ENCODE measurements at regions of chr12 and their contacts with region 1.

Region 1: GRCh38 chr12:54958048-54958658 is 26.4 kb downstream of the TESPA1 start:
- DNase-seq: peak in 29 of 35 experiments; percentile 3 to 80 (median 37)
- ATAC-seq: peak in 3 of 4 experiments; percentile 35 to 59 (median 51)
- H3K4me3 ChIP-seq: no peak overlapping the region
- H3K4me3 Mint-ChIP-seq: peak overlapping the region in 1 of 3 donors; percentile 25
- H3K27ac ChIP-seq: no peak overlapping the region
- H3K27ac Mint-ChIP-seq: peak overlapping the region; percentile 86 to 87
- H3K4me1 ChIP-seq: peaks cover 33 to 44% of the 10 kb centered on the region in 2 experiments
- H3K4me1 Mint-ChIP-seq: peaks cover 89 to 93% (median 90%) of the 10 kb centered on the region in 3 donors
- H3K27me3 ChIP-seq: no peaks in the 10 kb centered on the region
- H3K27me3 Mint-ChIP-seq: no peaks in the 10 kb centered on the region

Region 2: GRCh38 chr12:54701940-54702592 is 256.1 kb before region 1 on chr12:
- CTCF ChIA-PET with region 1: interaction called, 7 to 27 read pairs
- POLR2A ChIA-PET with region 1: no interaction called
- DNase-seq: peak in 11 of 35 experiments; percentile 4 to 81 (median 11)
- ATAC-seq: peak; percentile 48 to 55 (median 51)
- H3K4me3 ChIP-seq: no peak overlapping the region
- H3K4me3 Mint-ChIP-seq: no peak overlapping the region
- H3K27ac ChIP-seq: no peak overlapping the region
- H3K27ac Mint-ChIP-seq: no peak overlapping the region
- H3K4me1 ChIP-seq: no peaks in the 10 kb centered on the region
- H3K4me1 Mint-ChIP-seq: no peaks in the 10 kb centered on the region
- H3K27me3 ChIP-seq: peaks cover 0 to 3% of the 10 kb centered on the region in 2 experiments
- H3K27me3 Mint-ChIP-seq: peaks cover 8 to 12% of the 10 kb centered on the region in 2 donors

Region 3: DNA sequence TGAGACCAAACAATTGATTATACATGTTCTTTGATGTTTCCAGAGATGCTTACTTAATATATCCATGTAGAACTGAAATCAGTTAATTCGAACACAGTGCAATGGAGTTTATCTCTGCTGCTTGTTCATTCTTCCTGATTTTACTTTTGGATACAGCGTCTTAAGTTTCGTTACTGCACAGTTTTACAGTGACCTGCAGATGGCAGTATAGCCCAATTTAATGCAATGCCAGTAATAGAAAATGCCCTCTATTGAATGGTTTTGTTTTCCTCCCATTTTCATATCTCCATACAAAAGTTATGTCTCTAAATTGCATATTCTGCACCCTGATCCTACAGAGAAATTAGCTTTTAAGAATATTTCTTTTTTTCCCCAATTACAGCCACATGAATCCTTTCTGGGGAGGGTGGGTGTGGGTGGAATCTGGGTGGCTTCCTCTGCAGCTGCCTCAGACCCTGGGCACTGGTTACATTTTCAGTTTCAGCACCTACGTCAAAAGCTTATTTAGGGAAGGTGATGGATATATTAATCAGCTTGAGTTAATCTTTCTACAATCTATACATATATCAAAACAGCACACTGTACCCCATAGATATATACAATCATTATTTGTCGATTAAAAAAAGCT is 208.8 kb before region 1 on chr12:
- CTCF ChIA-PET with region 1: interaction called, 6 to 53 read pairs
- POLR2A ChIA-PET with region 1: no interaction called
- DNase-seq: peak in 25 of 35 experiments; percentile 7 to 84 (median 23)
- ATAC-seq: peak; percentile 62 to 69 (median 66)
- H3K4me3 ChIP-seq: no peak overlapping the region
- H3K4me3 Mint-ChIP-seq: peak overlapping the region in 2 of 3 donors; percentile 16 to 17
- H3K27ac ChIP-seq: no peak overlapping the region
- H3K27ac Mint-ChIP-seq: peak overlapping the region; percentile 23 to 44
- H3K4me1 ChIP-seq: peaks cover 7 to 15% of the 10 kb centered on the region in 2 experiments
- H3K4me1 Mint-ChIP-seq: peaks cover 20 to 28% (median 25%) of the 10 kb centered on the region in 3 donors
- H3K27me3 ChIP-seq: no peaks in the 10 kb centered on the region
- H3K27me3 Mint-ChIP-seq: no peaks in the 10 kb centered on the region

Region 4: DNA sequence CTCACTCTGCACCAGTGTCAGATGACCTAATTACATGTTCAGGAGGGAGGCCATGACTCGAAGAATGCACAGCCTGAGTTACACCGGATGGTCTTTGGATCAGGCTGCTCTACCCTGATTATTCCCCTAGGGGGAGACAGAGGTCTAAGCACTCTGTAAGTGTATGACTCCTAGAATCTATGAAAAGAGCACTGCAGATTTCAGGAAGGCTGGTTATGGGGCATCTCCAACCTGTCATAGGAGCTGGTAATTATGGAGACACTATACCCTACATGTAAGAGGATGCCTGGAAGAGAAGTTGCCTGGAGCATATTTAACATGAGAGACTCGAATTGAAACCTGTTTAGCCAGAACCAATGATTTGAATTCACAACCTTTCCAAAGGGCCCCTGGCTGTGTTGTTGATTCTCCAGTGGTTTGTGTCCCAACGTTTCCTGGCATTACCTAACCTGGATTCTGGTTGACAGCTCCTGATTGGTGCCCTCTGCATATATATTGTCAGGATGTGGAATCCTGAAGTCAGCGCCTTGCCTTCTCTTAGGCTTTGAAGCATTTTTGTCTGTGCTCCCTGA is 104.1 kb before region 1 on chr12 and contains the start of gene MUCL1:
- CTCF ChIA-PET with region 1: interaction called, 4 to 15 read pairs
- POLR2A ChIA-PET with region 1: no interaction called
- DNase-seq: peak; percentile 24 to 84 (median 58)
- ATAC-seq: peak; percentile 97 to 100 (median 98)
- H3K4me3 ChIP-seq: no peak within 1 kb of the TSS
- H3K4me3 Mint-ChIP-seq: no peak within 1 kb of the TSS
- H3K27ac ChIP-seq: no peak within 1 kb of the TSS
- H3K27ac Mint-ChIP-seq: no peak within 1 kb of the TSS
- H3K4me1 ChIP-seq: no peaks in the 10 kb centered on the region
- H3K4me1 Mint-ChIP-seq: peaks cover 2 to 5% (median 2%) of the 10 kb centered on the region in 3 donors
- H3K27me3 ChIP-seq: no peaks in the 10 kb centered on the region
- H3K27me3 Mint-ChIP-seq: peaks cover 0 to 4% of the 10 kb centered on the region in 2 donors
- total RNA-seq, gene MUCL1: not detected

Region 5: GRCh38 chr12:54977155-54977554 is 19.0 kb after region 1 on chr12:
- CTCF ChIA-PET with region 1: interaction called in 1 of 2 experiments, 12 read pairs
- POLR2A ChIA-PET with region 1: no interaction called
- DNase-seq: no peak
- ATAC-seq: no peak
- H3K4me3 ChIP-seq: peak overlapping the region in 1 of 2 donors; percentile 27
- H3K4me3 Mint-ChIP-seq: peak overlapping the region; percentile 90 to 92 (median 91)
- H3K27ac ChIP-seq: peak overlapping the region; percentile 13
- H3K27ac Mint-ChIP-seq: peak overlapping the region; percentile 92 to 98
- H3K4me1 ChIP-seq: peaks cover 53 to 75% of the 10 kb centered on the region in 2 experiments
- H3K4me1 Mint-ChIP-seq: peaks cover 96 to 99% (median 98%) of the 10 kb centered on the region in 3 donors
- H3K27me3 ChIP-seq: no peaks in the 10 kb centered on the region
- H3K27me3 Mint-ChIP-seq: no peaks in the 10 kb centered on the region

Region 6: GRCh38 chr12:54993161-54993835 is 35.1 kb after region 1 on chr12:
- CTCF ChIA-PET with region 1: interaction called, 3 to 19 read pairs
- POLR2A ChIA-PET with region 1: no interaction called
- DNase-seq: peak in 31 of 35 experiments; percentile 30 to 91 (median 46)
- ATAC-seq: peak; percentile 66 to 81 (median 74)
- H3K4me3 ChIP-seq: no peak overlapping the region
- H3K4me3 Mint-ChIP-seq: no peak overlapping the region
- H3K27ac ChIP-seq: no peak overlapping the region
- H3K27ac Mint-ChIP-seq: peak overlapping the region in 1 of 2 donors; percentile 25
- H3K4me1 ChIP-seq: peaks cover 31 to 34% of the 10 kb centered on the region in 2 experiments
- H3K4me1 Mint-ChIP-seq: peaks cover 44 to 47% (median 46%) of the 10 kb centered on the region in 3 donors
- H3K27me3 ChIP-seq: no peaks in the 10 kb centered on the region
- H3K27me3 Mint-ChIP-seq: no peaks in the 10 kb centered on the region

Region 7: DNA sequence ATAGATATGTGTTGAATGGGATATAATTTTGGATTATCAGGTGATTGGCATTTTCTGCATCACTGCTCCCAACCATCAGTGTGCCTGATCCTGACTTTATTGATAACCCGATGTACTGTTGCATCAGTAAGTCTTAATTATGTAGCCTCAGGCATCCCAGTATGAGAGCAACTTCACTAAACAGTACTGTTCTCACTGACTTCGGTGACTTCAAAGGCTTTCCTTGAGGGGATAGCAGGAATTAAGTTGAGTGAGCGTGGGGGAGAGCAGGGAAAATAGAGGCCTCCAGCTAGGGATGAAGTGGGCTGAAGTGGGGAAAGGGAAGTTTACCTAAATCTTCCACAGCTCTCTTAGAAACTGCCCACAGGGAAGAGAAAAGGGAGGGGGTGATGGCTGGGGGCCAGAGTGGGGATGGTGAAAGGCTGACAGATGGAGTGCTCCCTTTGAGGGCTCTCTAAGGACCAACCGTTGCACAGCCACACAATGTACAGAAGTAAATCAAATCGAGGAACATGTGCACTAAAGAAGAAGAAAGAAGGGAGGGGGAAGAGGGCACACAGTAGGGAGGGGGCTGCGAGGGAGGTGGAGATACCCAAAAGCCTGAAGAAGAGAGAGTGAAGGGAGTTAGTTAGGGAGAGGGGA is 50.9 kb after region 1 on chr12:
- CTCF ChIA-PET with region 1: no interaction called
- POLR2A ChIA-PET with region 1: no interaction called
- DNase-seq: no peak
- ATAC-seq: no peak
- H3K4me3 ChIP-seq: no peak overlapping the region
- H3K4me3 Mint-ChIP-seq: no peak overlapping the region
- H3K27ac ChIP-seq: no peak overlapping the region
- H3K27ac Mint-ChIP-seq: no peak overlapping the region
- H3K4me1 ChIP-seq: no peaks in the 10 kb centered on the region
- H3K4me1 Mint-ChIP-seq: no peaks in the 10 kb centered on the region
- H3K27me3 ChIP-seq: peaks cover 3 to 5% of the 10 kb centered on the region in 2 experiments
- H3K27me3 Mint-ChIP-seq: peaks cover 4% of the 10 kb centered on the region in 2 donors